Endothelial cell of umbilical vein (primary cell): ENCODE measurements at regions of chr4 and their contacts with region 1.

Region 1: GRCh38 chr4:139603576-139604387 is 47.8 kb upstream of the SETD7 start:
- DNase-seq: peak; percentile 61
- H3K4me3 ChIP-seq: no peak overlapping the region
- H3K27ac ChIP-seq: no peak overlapping the region
- H3K4me1 ChIP-seq: peaks cover 3% of the 10 kb centered on the region
- H3K27me3 ChIP-seq: no peaks in the 10 kb centered on the region
- CTCF ChIP-seq: peak; percentile 38 to 55
- POLR2A ChIP-seq: no peak

Region 2: DNA sequence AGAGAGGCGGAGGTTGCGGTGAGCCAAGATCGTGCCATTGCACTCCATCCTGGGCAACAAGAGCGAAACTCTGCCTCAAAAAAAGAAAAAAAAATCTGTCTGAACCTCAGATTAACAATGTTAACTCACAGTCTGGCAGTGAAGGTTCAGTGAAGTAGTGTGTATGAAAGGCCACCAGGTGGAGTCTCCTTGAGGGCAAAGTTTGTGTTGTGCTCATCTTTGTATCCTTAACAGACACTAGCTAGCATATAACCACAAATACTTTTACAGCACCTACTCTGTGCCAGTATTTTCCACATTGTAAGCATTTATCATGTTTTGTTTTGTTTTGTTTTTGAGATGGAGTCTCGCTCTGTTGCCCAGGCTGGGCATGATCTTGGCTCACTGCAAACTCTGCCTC is 15.9 kb after region 1 on chr4:
- CTCF ChIA-PET with region 1: interaction called, 24 read pairs
- POLR2A ChIA-PET with region 1: no interaction called
- dilution Hi-C with region 1: no loop called
- intact Hi-C with region 1: no loop called
- DNase-seq: no peak
- H3K4me3 ChIP-seq: no peak overlapping the region
- H3K27ac ChIP-seq: no peak overlapping the region
- H3K4me1 ChIP-seq: no peaks in the 10 kb centered on the region
- H3K27me3 ChIP-seq: peaks cover 5 to 7% of the 10 kb centered on the region in 2 experiments
- CTCF ChIP-seq: peak; percentile 33 to 50
- POLR2A ChIP-seq: no peak

Region 3: DNA sequence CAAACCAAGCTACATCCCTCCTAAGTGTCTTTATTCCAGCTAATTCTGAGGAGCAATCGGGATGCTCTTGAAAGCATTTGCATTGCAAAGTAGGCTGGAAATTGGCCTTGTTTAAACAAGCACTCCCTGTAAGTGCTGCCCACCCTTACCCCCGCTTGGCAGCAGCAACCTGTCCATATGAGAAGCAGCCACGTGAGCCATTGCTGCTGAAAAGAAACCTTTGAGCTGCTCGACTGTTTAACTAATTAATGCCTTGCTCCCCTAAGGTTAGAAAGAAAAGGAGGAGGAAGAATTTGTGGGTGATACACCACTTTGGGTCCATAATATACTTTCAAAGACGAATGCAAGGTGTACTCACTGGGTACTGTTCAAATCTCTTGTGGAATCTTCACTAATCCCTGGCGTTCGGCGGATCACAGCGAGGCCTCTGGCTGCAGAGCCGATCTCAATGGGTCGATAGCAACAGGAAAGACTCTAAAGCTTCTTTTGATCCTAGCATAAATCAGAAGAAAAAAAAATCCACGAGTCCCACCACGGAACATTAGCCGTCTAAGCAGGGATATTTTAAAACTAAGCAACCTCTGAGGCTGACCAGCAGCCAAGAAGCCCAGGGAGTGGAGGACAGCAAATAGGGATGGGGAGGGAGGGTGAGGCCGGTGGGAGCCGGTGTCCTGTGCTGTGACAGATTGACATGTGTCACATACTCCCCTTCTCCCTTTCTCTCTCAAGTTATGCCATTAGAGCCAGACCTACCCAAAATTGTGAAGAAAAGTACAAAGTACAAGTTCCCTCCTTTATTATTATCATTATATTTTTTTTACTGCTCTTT is 24.6 kb after region 1 on chr4:
- CTCF ChIA-PET with region 1: interaction called, 60 read pairs
- POLR2A ChIA-PET with region 1: no interaction called
- dilution Hi-C with region 1: no loop called
- intact Hi-C with region 1: loop called (anchors 1 kb)
- DNase-seq: no peak
- H3K4me3 ChIP-seq: no peak overlapping the region
- H3K27ac ChIP-seq: no peak overlapping the region
- H3K4me1 ChIP-seq: no peaks in the 10 kb centered on the region
- H3K27me3 ChIP-seq: peaks cover 15 to 16% of the 10 kb centered on the region in 2 experiments
- CTCF ChIP-seq: no peak
- POLR2A ChIP-seq: no peak

Region 4: GRCh38 chr4:139633661-139634060 is 29.9 kb after region 1 on chr4:
- CTCF ChIA-PET with region 1: interaction called, 60 read pairs
- POLR2A ChIA-PET with region 1: no interaction called
- dilution Hi-C with region 1: no loop called
- intact Hi-C with region 1: loop called (anchors 1 kb)
- DNase-seq: peak; percentile 29
- H3K4me3 ChIP-seq: no peak overlapping the region
- H3K27ac ChIP-seq: no peak overlapping the region
- H3K4me1 ChIP-seq: no peaks in the 10 kb centered on the region
- H3K27me3 ChIP-seq: peaks cover 13 to 14% of the 10 kb centered on the region in 2 experiments
- CTCF ChIP-seq: peak; percentile 11 to 40
- POLR2A ChIP-seq: no peak

Region 5: GRCh38 chr4:139645458-139645857 is 41.7 kb after region 1 on chr4:
- CTCF ChIA-PET with region 1: interaction called, 275 read pairs
- POLR2A ChIA-PET with region 1: no interaction called
- dilution Hi-C with region 1: no loop called
- intact Hi-C with region 1: no loop called
- DNase-seq: no peak
- H3K4me3 ChIP-seq: no peak overlapping the region
- H3K27ac ChIP-seq: no peak overlapping the region
- H3K4me1 ChIP-seq: no peaks in the 10 kb centered on the region
- H3K27me3 ChIP-seq: no peaks in the 10 kb centered on the region
- CTCF ChIP-seq: no peak
- POLR2A ChIP-seq: no peak

Region 6: GRCh38 chr4:139651282-139652194 is 47.8 kb after region 1 on chr4:
- CTCF ChIA-PET with region 1: interaction called, 275 read pairs
- POLR2A ChIA-PET with region 1: no interaction called
- dilution Hi-C with region 1: no loop called
- intact Hi-C with region 1: loop called (anchors 1 kb)
- DNase-seq: peak; percentile 82
- H3K4me3 ChIP-seq: no peak overlapping the region
- H3K27ac ChIP-seq: no peak overlapping the region
- H3K4me1 ChIP-seq: no peaks in the 10 kb centered on the region
- H3K27me3 ChIP-seq: no peaks in the 10 kb centered on the region
- CTCF ChIP-seq: peak; percentile 85 to 88
- POLR2A ChIP-seq: no peak

Region 7: DNA sequence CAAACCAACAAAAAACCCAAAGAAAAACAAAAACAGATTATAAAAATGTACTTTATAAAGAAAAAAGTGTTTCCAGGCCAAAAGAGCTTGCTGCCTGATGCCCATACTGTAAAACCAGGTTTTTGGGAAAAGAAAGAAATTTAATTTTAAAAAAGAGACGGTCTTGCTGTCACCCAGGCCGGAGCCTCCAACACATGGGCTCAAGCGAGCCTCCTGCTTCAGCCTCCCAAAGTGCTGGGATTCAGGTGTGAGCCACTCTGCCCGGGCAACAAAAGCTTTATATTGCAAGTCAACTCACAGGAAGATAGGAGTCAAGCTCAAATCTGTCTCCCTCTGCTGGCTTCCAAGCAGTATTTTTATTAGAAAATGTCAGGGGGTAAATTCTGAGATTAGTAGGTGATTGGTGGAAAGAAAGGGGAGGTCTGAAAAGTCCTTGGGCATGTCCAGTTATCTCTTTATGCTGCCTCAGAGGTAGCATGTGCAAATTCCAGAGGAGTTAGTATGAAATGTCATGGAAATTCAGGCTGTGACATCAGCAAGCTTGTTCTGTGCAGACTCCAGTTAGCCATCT is 101.2 kb after region 1 on chr4:
- CTCF ChIA-PET with region 1: interaction called, 12 read pairs
- POLR2A ChIA-PET with region 1: no interaction called
- dilution Hi-C with region 1: no loop called
- intact Hi-C with region 1: no loop called
- DNase-seq: peak; percentile 15
- H3K4me3 ChIP-seq: no peak overlapping the region
- H3K27ac ChIP-seq: no peak overlapping the region
- H3K4me1 ChIP-seq: no peaks in the 10 kb centered on the region
- H3K27me3 ChIP-seq: no peaks in the 10 kb centered on the region
- CTCF ChIP-seq: peak; percentile 19 to 38
- POLR2A ChIP-seq: no peak